MCF 10A (cell line): ENCODE measurements at regions of chr6 and their contacts with region 1.

Region 1: DNA sequence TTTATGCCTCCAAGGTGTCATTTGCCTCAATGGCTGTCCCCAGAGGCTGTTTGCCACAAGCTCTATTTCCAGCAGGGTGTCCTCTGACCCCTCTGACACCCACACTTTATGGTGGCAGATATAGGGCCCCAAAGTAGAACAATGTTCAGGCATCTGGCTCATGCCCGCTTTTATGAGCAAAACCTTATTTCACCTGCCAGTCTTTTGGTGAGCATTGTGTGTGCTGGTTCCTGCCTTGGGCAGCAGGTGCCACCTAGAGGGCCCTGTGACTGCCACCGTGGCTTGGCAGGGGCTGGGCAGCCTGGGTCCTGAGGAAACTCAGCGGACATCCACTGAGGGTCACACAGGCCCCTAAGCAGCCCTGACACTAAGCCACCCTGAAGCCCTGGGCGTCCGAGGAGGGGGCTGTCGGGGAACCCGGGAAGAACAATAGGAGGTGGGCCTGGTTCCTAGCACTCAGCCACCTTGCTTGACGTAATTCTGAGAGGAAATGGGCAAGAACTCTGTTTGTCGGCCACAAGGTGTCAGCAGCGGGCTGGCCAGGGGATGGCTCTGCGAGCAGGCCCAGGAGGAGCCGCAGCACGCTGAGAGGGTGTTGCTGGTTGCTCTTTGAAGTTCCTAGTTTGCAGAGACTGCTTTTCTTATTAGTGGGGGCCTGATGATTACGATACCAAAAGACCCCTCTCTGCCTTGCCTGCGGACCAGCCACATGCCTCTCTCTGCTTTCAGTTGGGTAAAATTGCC is 148.9 kb downstream of the SCML4 start:
- DNase-seq: peak; percentile 82
- H3K4me3 Mint-ChIP-seq: no peak overlapping the region
- H3K27ac Mint-ChIP-seq: peak overlapping the region; percentile 51
- H3K4me1 Mint-ChIP-seq: peaks cover 5% of the 10 kb centered on the region
- H3K27me3 Mint-ChIP-seq: no peaks in the 10 kb centered on the region
- CTCF ChIP-seq: peak; percentile 89

Region 2: GRCh38 chr6:107132330-107132954 is 542.7 kb before region 1 on chr6:
- CTCF ChIA-PET with region 1: interaction called, 4 read pairs
- POLR2A ChIA-PET with region 1: interaction called, 4 read pairs
- intact Hi-C with region 1: loop called (anchors 1 kb)
- DNase-seq: peak; percentile 44
- H3K4me3 Mint-ChIP-seq: no peak overlapping the region
- H3K27ac Mint-ChIP-seq: no peak overlapping the region
- H3K4me1 Mint-ChIP-seq: no peaks in the 10 kb centered on the region
- H3K27me3 Mint-ChIP-seq: no peaks in the 10 kb centered on the region
- CTCF ChIP-seq: peak; percentile 52

Region 3: DNA sequence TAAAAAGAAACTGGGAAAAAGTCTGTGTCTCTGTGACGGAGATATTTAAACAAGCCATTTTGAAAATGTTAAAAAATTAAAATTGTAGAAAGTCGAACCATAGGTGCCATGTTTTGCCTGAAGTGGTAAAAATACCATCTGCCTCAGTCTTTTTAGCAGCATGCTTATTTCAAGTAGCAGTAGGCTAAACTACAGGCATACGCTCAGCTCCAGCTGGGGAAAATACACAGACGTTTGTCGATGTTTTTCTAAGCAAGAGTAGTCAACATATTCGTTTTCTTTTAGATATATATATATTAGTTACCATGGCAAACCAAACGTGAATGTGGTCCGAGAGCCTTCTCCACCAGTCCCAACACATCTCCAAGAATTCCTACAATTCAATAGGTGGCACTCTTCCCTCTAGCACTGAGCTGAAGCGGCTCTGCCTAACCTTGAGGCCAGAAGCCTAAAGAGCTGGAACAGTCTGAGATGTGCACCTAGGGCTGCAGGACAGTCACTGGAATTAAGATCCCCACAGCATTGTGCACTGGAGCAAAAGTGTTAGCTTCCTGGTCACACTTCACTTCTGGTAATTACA is 489.7 kb before region 1 on chr6:
- CTCF ChIA-PET with region 1: interaction called, 5 read pairs
- POLR2A ChIA-PET with region 1: no interaction called
- intact Hi-C with region 1: loop called (anchors 1 kb)
- DNase-seq: peak; percentile 58
- H3K4me3 Mint-ChIP-seq: no peak overlapping the region
- H3K27ac Mint-ChIP-seq: no peak overlapping the region
- H3K4me1 Mint-ChIP-seq: no peaks in the 10 kb centered on the region
- H3K27me3 Mint-ChIP-seq: no peaks in the 10 kb centered on the region
- CTCF ChIP-seq: peak; percentile 42

Region 4: DNA sequence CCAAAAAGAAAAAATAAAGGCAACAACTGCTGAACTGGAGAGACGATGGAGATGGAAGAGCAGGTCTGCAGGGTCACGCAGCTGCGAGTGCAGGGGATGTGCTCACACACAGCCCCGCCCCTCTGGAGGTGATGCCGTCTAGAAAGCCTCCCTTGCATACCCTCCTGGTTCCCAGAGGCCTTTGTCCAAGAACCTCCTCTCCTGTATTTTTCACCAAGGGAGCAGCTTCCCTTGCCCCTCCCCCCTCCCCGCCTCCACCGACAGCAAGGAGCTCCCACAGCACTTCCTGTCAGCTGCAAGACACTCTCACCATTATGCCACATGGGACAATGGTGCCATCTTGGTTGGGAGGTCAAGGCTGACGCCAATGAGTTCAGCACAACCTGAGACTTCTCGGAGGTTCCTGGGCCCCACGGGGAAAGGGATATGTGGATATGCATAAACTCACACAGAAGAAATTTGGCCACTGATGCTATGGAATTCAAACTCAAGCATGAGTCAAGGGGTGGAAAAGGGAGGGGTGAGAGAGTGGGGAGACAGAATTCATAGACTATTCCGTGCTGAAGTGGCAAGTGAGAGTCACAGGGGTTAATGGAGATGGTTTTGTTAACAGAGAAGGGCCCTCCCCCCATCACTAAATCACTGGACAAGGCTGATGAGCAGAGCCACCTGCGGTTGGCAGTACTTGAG is 16.0 kb after region 1 on chr6:
- CTCF ChIA-PET with region 1: interaction called, 12 read pairs
- POLR2A ChIA-PET with region 1: no interaction called
- intact Hi-C with region 1: no loop called
- DNase-seq: peak; percentile 31
- H3K4me3 Mint-ChIP-seq: no peak overlapping the region
- H3K27ac Mint-ChIP-seq: no peak overlapping the region
- H3K4me1 Mint-ChIP-seq: no peaks in the 10 kb centered on the region
- H3K27me3 Mint-ChIP-seq: no peaks in the 10 kb centered on the region
- CTCF ChIP-seq: no peak

Region 5: DNA sequence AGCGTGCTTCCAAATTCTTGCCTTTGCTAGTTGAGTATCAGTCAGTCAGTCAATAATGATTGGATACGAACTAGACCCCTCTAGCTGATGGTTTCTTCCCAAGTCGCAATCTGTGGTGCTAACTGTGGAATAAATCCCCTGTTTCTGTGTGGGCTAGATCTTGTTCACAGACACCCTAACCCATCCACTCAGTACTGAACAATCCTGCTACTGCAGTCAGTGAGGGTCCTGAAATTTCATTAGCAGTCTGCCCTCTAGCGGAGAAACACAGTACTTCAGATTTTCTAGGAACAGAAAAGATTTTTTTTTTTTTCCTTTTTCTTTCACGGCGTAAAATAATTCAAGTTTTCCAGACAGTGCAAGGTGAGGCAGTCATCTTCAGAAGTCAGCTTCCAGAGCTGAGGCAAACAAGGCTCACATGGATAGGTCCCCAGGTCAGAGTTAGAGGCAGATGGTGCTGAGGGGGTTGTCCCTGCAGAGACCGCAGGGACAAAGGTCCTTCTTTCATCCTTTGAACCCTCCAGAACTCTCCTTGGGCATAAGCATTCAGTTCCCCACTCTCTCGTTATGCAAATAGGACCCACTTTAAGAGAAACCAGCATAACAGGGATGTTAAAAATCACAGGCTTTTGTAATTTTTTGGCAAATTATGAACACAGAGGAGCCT is 29.3 kb after region 1 on chr6:
- CTCF ChIA-PET with region 1: interaction called, 11 read pairs
- POLR2A ChIA-PET with region 1: interaction called, 3 read pairs
- intact Hi-C with region 1: loop called (anchors 2 kb)
- DNase-seq: peak; percentile 45
- H3K4me3 Mint-ChIP-seq: no peak overlapping the region
- H3K27ac Mint-ChIP-seq: no peak overlapping the region
- H3K4me1 Mint-ChIP-seq: no peaks in the 10 kb centered on the region
- H3K27me3 Mint-ChIP-seq: peaks cover 7% of the 10 kb centered on the region
- CTCF ChIP-seq: peak; percentile 81

Region 6: DNA sequence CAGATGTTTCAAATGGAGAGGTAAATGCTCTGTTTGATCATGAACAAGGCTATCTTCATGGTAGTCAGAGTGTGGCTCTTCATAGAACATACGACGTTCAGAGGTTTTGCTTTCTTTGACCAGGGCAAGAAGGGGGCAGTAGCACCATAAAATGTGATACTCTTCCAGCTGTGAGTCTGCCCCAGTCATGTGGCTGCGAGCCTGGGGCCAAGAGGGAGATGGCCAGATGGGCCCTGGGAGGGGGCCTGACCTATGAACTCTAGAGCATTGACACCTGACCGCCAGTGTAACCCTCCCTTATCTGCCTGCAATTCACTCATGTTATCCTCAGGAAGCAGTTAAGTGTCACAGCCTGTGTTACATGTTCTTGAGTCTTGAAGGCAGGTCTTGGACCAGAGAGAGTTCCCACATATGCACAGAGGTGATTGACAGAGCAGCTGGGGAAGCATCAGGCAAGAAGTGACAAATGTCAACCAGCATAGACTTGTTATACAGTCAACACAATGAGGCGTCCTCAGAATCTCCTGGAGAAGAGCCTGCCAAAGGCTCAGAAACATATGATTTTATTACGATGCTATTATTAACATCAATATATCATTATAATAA is 94.0 kb after region 1 on chr6:
- CTCF ChIA-PET with region 1: no interaction called
- POLR2A ChIA-PET with region 1: no interaction called
- intact Hi-C with region 1: no loop called
- DNase-seq: no peak
- H3K4me3 Mint-ChIP-seq: no peak overlapping the region
- H3K27ac Mint-ChIP-seq: no peak overlapping the region
- H3K4me1 Mint-ChIP-seq: no peaks in the 10 kb centered on the region
- H3K27me3 Mint-ChIP-seq: no peaks in the 10 kb centered on the region
- CTCF ChIP-seq: no peak